HAP-1 (cell line): ENCODE measurements at regions of chr11 and their contacts with region 1.

Region 1: GRCh38 chr11:62472012-62472884 is 53.4 kb downstream of the SCGB1A1 start:
- DNase-seq: no peak
- H3K4me3 ChIP-seq: no peak overlapping the region
- H3K4me1 ChIP-seq: no peaks in the 10 kb centered on the region
- H3K27me3 ChIP-seq: no peaks in the 10 kb centered on the region

Region 2: DNA sequence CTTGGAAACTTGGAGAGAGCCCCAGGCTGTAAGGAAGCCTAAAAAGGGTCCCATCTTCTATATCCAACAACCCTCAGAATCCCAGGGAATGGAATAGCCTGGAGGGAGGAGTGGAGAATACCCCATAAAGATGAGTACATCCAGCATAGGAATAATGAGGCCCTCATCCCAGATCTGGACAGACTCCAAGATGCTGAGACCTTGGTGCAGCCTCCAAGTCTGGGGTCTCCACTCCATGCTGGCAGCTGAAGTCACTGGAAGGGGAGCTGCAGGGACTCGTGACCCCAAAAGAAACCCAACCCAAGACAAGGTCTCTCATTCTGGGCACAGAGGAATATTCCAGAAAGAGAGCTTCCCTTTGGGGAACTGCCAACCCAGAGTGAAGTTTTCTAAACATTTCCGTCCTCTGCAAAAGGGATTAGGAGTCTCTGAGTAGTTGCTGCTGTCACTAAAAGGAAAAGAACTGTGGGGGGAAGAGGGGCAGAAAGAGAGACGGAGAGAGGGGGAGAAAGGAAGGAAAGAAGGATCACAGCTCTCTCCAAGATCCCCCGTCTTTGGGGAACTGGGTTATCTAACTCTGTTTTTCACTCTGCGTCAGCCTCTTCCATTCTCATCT is 52.8 kb before region 1 on chr11:
- in situ Hi-C with region 1: loop called (anchors 10 kb)
- DNase-seq: no peak
- H3K4me3 ChIP-seq: no peak overlapping the region
- H3K4me1 ChIP-seq: no peaks in the 10 kb centered on the region
- H3K27me3 ChIP-seq: no peaks in the 10 kb centered on the region

Region 3: DNA sequence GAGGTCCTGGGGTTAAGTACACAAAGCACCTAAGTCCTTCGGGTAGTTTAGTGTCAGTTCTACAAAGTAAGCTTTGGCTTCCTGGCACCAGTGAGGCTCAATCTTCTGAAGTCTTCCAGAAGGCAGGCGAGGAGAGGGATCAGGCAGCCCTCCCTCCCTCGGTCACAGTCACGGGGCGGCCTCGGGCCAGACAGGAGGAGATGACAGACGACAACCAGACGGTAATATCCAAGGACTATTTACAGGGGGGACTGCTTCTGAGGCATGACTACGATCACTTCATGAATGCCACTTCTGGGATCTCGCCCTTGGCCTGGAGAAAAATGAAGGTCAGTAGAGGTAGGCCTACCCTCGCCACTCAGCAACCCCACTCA is 319.9 kb after region 1 on chr11:
- in situ Hi-C with region 1: no loop called
- DNase-seq: no peak
- H3K4me3 ChIP-seq: peak overlapping the region; percentile 87
- H3K4me1 ChIP-seq: peaks cover 7% of the 10 kb centered on the region
- H3K27me3 ChIP-seq: no peaks in the 10 kb centered on the region